ENCODE measurements at regions of chr1 and their contacts with region 1.

Region 1: DNA sequence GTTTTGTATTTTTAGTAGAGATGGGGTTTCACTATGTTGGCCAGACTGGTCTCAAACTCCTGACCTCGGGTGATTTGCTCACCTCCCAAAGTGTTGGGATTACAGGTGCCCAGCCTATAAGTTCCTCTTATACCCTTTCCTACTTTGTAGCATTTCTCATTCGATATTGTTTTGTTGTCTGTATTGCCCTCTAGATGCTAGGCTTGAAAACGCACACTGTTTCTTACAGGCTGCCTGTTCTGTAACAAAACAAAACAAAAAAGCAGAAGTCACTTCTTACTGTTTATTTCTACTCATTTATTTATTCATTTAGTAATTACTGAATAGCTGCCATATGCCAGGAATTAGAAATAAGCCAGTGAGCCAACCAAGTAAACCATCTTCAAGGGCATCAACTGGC is 136.9 kb upstream of the BMP8A start:
- DNase-seq: no peak
- ATAC-seq: no peak
- H3K4me3 ChIP-seq: no peak overlapping the region
- H3K4me3 Mint-ChIP-seq: no peak overlapping the region
- H3K27ac ChIP-seq: no peak overlapping the region
- H3K27ac Mint-ChIP-seq: peak overlapping the region; percentile 1
- H3K4me1 ChIP-seq: no peaks in the 10 kb centered on the region
- H3K4me1 Mint-ChIP-seq: no peaks in the 10 kb centered on the region
- H3K27me3 ChIP-seq: no peaks in the 10 kb centered on the region
- H3K27me3 Mint-ChIP-seq: no peaks in the 10 kb centered on the region
- CTCF ChIP-seq: no peak

Region 2: DNA sequence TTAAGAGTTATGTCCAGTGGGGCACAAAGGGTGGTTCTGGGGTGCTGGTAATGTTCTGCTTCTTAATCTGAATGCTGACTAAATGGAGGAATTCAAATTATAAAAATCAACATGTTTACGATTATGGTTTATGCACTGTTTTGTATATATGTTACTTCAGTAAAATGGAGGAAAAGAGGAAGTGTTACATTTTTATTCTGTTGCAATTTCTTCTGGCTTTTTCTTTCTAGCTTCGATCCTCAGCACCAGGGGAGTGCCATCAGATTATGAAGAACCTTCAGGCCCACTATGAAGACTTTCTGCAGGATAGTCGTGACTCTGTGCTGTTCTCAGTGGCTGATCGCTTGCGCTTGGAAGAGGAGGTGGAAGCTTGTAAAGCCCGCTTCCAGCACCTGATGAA is 44.6 kb before region 1 on chr1:
- CTCF ChIA-PET with region 1: no interaction called
- POLR2A ChIA-PET with region 1: no interaction called
- intact Hi-C with region 1: loop called in 1 of 2 experiments (anchors 5 kb)
- DNase-seq: no peak
- ATAC-seq: no peak
- H3K4me3 ChIP-seq: no peak overlapping the region
- H3K4me3 Mint-ChIP-seq: no peak overlapping the region
- H3K27ac ChIP-seq: no peak overlapping the region
- H3K27ac Mint-ChIP-seq: peak overlapping the region; percentile 27
- H3K4me1 ChIP-seq: no peaks in the 10 kb centered on the region
- H3K4me1 Mint-ChIP-seq: no peaks in the 10 kb centered on the region
- H3K27me3 ChIP-seq: no peaks in the 10 kb centered on the region
- H3K27me3 Mint-ChIP-seq: no peaks in the 10 kb centered on the region
- CTCF ChIP-seq: no peak

Region 3: DNA sequence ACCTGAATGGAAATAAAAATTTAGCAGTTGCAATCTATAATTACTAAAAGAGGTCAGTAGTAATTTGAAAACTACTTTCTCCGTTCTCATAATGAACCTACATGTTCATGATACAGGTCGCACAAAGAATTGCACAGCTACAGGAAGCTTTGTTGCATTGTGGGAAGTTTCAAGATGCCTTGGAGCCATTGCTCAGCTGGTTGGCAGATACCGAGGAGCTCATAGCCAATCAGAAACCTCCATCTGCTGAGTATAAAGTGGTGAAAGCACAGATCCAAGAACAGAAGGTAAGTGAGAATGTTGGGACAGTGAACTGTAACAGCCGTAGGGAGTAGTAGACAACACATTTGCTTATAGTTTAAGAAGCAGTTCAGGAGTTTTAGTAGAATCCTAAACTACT is 68.0 kb after region 1 on chr1:
- CTCF ChIA-PET with region 1: no interaction called
- POLR2A ChIA-PET with region 1: no interaction called
- intact Hi-C with region 1: loop called in 1 of 2 experiments (anchors 10 kb)
- DNase-seq: no peak
- ATAC-seq: no peak
- H3K4me3 ChIP-seq: no peak overlapping the region
- H3K4me3 Mint-ChIP-seq: no peak overlapping the region
- H3K27ac ChIP-seq: no peak overlapping the region
- H3K27ac Mint-ChIP-seq: peak overlapping the region; percentile 10
- H3K4me1 ChIP-seq: no peaks in the 10 kb centered on the region
- H3K4me1 Mint-ChIP-seq: peaks cover 8% of the 10 kb centered on the region
- H3K27me3 ChIP-seq: no peaks in the 10 kb centered on the region
- H3K27me3 Mint-ChIP-seq: no peaks in the 10 kb centered on the region
- CTCF ChIP-seq: no peak

Measured in CD8-positive, alpha-beta T cell (primary cell).